Posterior vena cava (tissue), 2 donors: ENCODE measurements at regions of chr1 and their contacts with region 1.

Region 1: GRCh38 chr1:181099152-181100014 is 10.9 kb downstream of the IER5 start:
- DNase-seq: no peak

Region 2: DNA sequence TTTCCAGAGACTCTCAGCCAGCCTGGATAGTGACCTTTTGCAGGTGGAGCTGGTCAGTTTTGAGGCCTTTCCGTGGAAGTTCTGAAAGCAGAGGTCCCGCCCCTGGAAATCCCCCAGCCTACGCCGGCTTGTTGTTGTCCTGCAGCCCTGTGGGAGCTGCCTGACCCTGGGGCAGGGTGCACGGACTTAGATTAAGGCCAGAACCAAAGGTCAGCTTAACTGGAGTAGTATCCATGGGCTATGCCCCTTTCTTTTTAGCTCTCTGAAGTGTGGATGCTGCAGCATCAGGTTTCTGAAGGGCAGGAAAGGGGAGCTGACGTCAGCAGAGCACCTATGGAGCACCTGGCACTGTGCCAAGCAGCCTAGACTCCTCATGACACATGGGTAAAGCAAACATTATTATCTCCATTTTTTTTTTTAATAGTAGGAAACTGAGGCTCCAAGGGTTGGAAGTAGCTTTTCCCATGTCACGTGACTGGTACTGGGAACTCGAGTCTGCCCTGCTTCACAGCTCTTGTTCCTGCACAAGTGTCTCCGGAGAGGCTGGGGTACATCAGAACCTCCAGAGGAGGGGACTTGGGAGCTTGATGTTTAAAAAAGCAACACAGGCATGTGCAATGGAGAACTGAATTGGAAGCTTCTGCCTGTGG is 27.7 kb after region 1 on chr1:
- intact Hi-C with region 1: loop called in 1 of 2 experiments (anchors 2 kb)
- DNase-seq: no peak